Motor neuron (in vitro differentiated cells): ENCODE measurements at regions of chr11 and their contacts with region 1.

Region 1: DNA sequence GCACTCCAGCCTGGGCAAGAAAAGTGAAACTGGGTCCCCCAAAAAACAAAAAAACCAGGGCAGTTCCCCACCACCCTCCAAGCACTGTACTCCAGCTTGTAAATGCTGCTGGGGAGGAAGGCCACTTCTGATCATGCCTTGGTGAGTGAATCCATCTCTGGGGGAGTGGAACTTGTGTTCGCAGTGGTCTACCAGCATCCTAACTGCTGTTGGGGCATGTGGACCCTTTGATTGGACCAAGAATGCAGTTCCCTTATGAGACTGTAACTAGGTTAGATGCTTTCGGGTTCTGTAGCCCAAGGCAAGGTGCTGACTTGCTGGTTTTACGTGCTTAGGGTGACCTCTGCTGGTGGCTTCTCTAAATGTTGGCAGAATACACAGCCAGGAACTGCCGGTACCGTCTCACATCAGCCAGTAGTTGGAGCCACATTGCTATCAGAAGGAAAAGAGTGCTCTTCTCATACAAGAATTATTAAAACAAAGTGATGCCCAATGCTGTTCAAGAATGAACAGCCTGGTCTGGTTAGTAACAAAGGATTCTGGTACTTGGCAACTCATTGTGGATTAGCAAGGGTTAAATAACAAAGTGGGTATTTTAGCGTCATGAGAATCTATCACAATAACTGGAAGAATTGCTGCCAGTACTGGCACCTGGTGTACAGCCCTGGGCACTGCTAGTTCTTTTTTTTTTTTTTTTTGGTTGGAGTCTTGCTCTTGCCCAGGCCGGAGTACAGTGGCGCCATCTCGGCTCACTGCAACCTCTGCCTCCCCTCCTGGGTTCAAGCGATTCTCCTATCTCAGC is 13.0 kb downstream of the EIF1AD start:
- ATAC-seq: peak; percentile 99 to 100 (median 99)
- H3K4me3 ChIP-seq: no peak overlapping the region
- H3K27ac ChIP-seq: no peak overlapping the region
- H3K4me1 ChIP-seq: no peaks in the 10 kb centered on the region

Region 2: DNA sequence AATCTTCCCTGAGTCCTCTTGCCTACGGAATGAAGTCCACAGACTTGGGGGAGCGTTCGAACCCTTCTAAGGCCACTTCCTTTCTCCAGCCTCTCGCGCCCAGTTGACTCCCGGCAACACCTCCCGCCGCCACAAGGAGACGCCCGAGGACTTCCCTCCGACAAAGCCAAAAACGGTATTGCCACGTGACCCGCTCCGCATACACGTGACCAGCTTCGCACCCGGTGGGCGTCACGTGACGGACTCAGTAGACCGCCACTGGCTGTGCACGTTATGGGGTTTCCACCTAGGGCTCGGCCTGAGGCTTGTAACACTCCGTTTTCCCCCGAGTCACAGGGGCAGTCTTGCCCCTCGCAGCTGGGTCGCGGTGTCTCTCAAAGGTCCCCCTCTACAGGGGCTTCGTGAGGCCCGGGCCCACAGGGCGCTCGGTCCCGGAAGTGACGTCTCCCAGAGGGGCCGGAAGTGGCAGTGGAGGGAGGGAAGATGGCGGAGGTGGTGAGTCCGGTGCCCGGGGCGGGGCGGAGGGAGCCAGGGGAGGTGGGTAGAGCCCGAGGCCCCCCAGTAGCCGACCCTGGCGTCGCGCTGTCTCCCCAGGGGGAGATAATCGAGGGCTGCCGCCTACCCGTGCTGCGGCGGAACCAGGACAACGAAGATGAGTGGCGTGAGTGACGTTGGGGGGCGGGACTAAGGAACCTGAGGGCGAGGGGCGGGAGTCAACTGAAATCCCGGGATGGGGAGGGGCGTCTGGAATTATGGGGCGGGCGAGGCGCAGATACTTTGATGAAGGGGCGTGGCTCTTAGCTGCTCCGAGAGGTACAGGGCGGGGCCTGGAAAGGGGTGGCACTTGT is 277.0 kb before region 1 on chr11 and contains the start of gene KAT5:
- in situ Hi-C with region 1: loop called in 3 of 9 experiments (anchors 25 kb)
- ATAC-seq: peak; percentile 77 to 92 (median 88)
- H3K4me3 ChIP-seq: peak within 1 kb of the TSS; percentile 60 to 90 (median 81)
- H3K27ac ChIP-seq: peak within 1 kb of the TSS; percentile 99
- H3K4me1 ChIP-seq: peaks cover 7 to 10% of the 10 kb centered on the region in 2 donors
- total RNA-seq, gene KAT5: 33.4 to 66.8 (median 48.6) TPM

Region 3: DNA sequence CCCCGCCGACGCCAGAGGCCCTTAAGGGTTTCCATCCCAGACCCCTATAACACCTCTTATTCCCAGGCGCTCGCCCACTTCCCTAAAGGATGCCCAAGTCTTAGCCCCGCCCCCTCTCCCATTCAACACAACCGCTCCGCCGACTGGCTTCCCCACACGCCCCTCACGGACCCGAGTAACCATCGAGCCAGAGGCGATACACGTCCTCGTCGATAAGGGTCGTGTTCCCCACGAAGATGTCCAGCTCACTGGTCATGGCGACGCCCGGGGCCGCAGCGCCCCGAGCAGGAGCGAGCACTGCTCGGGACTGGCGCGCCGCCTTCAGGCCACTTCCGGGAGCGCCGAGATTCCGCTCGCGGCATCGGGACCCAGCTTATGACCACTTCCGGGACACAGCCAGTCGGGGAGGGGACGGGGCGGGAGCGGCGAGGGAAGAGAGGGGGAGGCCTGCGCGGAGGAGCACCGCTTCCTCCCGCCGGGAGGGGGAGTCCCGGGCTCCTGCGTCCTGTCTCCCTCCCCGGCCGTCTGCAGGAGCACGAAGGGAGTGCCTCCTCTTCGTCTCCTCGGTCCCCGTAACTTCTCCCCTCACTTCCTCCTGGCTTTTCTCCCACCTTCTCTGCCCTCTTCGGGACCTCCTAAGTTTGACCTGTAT is 100.7 kb before region 1 on chr11 and contains the start of gene FIBP:
- in situ Hi-C with region 1: loop called in 2 of 9 experiments (anchors 10 to 25 kb)
- ATAC-seq: peak; percentile 40 to 81 (median 78)
- H3K4me3 ChIP-seq: peak within 1 kb of the TSS; percentile 55 to 95 (median 58)
- H3K27ac ChIP-seq: peak within 1 kb of the TSS; percentile 88
- H3K4me1 ChIP-seq: peaks cover 32 to 34% of the 10 kb centered on the region in 2 donors
- total RNA-seq, gene FIBP: 63.4 to 99.1 (median 84.6) TPM

Region 4: GRCh38 chr11:66545701-66546367 is 556.8 kb after region 1 on chr11 and contains the start of gene ZDHHC24:
- in situ Hi-C with region 1: no loop called
- ATAC-seq: peak; percentile 93 to 97 (median 94)
- H3K4me3 ChIP-seq: peak within 1 kb of the TSS; percentile 49 to 71 (median 68)
- H3K27ac ChIP-seq: peak within 1 kb of the TSS; percentile 11 to 68
- H3K4me1 ChIP-seq: peaks cover 23 to 29% of the 10 kb centered on the region in 2 donors
- total RNA-seq, gene ZDHHC24: 5.2 to 12.7 (median 8.4) TPM